Endothelial cell of umbilical vein (primary cell): ENCODE measurements at regions of chr6 and their contacts with region 1.

Region 1: DNA sequence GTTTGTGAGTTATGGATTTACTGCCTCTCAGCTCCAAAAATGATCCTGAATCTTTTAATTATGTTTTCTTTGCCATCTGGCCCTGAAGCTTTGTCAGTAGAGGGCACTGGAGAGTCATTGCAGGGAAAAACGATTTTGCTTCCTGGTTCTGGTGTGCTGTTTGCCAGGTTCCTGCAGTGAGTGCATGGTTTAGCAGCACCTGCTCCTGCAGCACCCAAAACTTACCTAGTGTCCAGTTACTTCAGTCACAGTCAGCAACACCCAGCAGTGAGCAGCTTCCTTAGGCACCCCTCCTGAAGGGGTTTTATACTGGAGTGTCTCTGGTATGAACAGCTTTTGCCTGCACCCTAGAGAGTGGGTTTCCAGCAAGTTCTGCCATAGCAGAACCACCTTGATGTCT is 6.0 kb upstream of the TRIM26 start:
- DNase-seq: peak; percentile 67
- H3K4me3 ChIP-seq: no peak overlapping the region
- H3K27ac ChIP-seq: no peak overlapping the region
- H3K4me1 ChIP-seq: peaks cover 3% of the 10 kb centered on the region
- H3K27me3 ChIP-seq: no peaks in the 10 kb centered on the region
- CTCF ChIP-seq: peak; percentile 77 to 82
- POLR2A ChIP-seq: no peak

Region 2: GRCh38 chr6:30206799-30207618 is 12.2 kb before region 1 on chr6:
- CTCF ChIA-PET with region 1: interaction called, 18 read pairs
- POLR2A ChIA-PET with region 1: no interaction called
- dilution Hi-C with region 1: no loop called
- intact Hi-C with region 1: no loop called
- DNase-seq: peak; percentile 8
- H3K4me3 ChIP-seq: no peak overlapping the region
- H3K27ac ChIP-seq: no peak overlapping the region
- H3K4me1 ChIP-seq: peaks cover 15% of the 10 kb centered on the region
- H3K27me3 ChIP-seq: no peaks in the 10 kb centered on the region
- CTCF ChIP-seq: no peak
- POLR2A ChIP-seq: no peak

Region 3: GRCh38 chr6:30238174-30238795 is 19.0 kb after region 1 on chr6:
- CTCF ChIA-PET with region 1: interaction called, 16 read pairs
- POLR2A ChIA-PET with region 1: no interaction called
- dilution Hi-C with region 1: no loop called
- intact Hi-C with region 1: no loop called
- DNase-seq: no peak
- H3K4me3 ChIP-seq: no peak overlapping the region
- H3K27ac ChIP-seq: no peak overlapping the region
- H3K4me1 ChIP-seq: no peaks in the 10 kb centered on the region
- H3K27me3 ChIP-seq: peaks cover 7 to 17% of the 10 kb centered on the region in 2 experiments
- CTCF ChIP-seq: peak in 1 of 2 donors; percentile 34
- POLR2A ChIP-seq: no peak

Region 4: DNA sequence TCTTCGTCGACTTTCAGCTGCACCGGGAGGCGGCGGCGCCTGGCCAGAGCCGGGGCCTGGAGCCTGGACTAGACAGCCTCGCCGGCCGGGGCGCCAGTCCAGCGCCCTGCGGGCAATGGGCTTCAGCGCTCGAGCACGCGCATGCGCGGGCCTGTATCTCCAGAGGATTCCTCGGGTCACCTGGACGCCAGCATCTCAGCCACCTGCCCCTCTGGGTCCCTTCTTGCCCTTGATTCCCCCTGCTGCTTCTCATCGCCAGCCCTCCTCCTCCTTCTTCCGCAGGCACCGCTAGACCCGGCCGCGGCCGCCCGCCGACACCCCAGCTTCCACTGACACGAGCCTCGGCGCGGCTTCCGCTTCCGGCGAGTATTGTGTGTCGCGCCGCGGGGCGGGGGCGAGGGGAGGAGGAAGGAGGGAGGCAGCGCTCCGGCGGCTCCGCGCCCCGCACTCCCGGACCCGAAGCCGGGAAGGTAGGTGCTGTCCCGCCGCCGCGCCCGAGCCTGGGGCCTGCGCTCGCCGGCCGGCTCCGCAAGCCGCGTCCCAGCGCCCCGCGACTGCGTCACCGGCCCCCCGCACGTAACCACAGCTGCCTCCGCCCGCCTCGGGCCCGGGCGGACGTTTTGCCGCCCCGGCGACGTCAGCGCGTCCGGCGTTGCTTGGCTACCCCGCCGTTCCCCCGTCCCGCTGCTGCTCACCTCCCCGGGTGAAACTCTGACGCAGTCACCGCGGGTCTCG is 107.4 kb after region 1 on chr6 and contains the start of gene TRIM39:
- CTCF ChIA-PET with region 1: interaction called, 19 read pairs
- POLR2A ChIA-PET with region 1: no interaction called
- dilution Hi-C with region 1: no loop called
- intact Hi-C with region 1: no loop called
- DNase-seq: peak; percentile 85
- H3K4me3 ChIP-seq: peak within 1 kb of the TSS; percentile 65 to 87 (median 85)
- H3K27ac ChIP-seq: peak within 1 kb of the TSS; percentile 89
- H3K4me1 ChIP-seq: peaks cover 24% of the 10 kb centered on the region
- H3K27me3 ChIP-seq: no peaks in the 10 kb centered on the region
- CTCF ChIP-seq: no peak
- POLR2A ChIP-seq: peak; percentile 62
- total RNA-seq, gene TRIM39: 13.1 and 13.5 TPM in 2 replicates

Region 5: GRCh38 chr6:30349421-30350177 is 130.4 kb after region 1 on chr6:
- CTCF ChIA-PET with region 1: interaction called, 4 read pairs
- POLR2A ChIA-PET with region 1: no interaction called
- dilution Hi-C with region 1: no loop called
- intact Hi-C with region 1: loop called (anchors 2 kb)
- DNase-seq: no peak
- H3K4me3 ChIP-seq: no peak overlapping the region
- H3K27ac ChIP-seq: no peak overlapping the region
- H3K4me1 ChIP-seq: peaks cover 7% of the 10 kb centered on the region
- H3K27me3 ChIP-seq: peaks cover 6 to 18% of the 10 kb centered on the region in 2 experiments
- CTCF ChIP-seq: no peak
- POLR2A ChIP-seq: no peak

Region 6: DNA sequence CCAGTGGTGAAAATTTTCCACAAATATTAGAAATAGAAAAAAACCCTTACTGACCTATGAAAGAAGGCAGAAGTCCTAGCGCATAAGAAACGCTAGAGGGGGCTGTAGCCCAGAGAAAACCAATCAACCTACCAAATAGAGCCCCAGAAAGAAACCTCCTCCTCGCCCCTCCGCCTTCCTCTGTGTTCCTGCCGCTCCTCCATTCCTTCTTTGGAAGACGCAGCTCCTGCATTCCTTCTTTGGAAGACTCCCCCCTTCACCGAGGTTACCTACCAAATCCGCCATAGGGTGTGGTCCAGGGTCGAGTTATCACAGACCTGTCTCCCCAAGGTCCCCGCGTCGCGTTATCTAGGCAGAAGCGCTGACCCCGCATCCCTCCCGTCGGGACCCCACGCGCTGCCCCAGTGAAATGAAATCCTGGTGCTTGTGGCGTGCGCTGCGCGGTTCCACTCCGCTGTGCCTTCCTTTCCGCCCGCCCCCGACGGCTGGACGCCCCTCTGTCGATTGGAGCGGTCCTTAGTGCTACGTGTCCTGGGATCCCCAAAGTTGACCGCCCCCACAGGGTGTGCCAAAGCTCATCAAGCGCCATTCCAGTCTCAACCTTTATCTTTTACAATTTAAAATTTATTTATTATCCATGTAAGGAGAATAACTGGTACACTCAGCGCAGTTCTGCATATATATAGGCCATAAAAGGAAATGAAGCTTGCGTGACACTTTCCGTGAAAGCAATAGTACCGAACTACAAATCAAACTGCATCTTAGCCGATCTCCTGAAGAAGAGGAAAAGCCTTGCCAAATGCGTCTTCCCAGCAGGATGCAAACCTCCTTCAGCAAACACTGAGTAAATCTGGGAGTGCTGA is 138.7 kb after region 1 on chr6:
- CTCF ChIA-PET with region 1: interaction called, 10 read pairs
- POLR2A ChIA-PET with region 1: no interaction called
- dilution Hi-C with region 1: no loop called
- intact Hi-C with region 1: no loop called
- DNase-seq: peak; percentile 71
- H3K4me3 ChIP-seq: peak overlapping the region; percentile 34 to 54 (median 43)
- H3K27ac ChIP-seq: no peak overlapping the region
- H3K4me1 ChIP-seq: peaks cover 5% of the 10 kb centered on the region
- H3K27me3 ChIP-seq: peaks cover 31 to 57% of the 10 kb centered on the region in 2 experiments
- CTCF ChIP-seq: peak; percentile 79 to 83
- POLR2A ChIP-seq: no peak

Region 7: DNA sequence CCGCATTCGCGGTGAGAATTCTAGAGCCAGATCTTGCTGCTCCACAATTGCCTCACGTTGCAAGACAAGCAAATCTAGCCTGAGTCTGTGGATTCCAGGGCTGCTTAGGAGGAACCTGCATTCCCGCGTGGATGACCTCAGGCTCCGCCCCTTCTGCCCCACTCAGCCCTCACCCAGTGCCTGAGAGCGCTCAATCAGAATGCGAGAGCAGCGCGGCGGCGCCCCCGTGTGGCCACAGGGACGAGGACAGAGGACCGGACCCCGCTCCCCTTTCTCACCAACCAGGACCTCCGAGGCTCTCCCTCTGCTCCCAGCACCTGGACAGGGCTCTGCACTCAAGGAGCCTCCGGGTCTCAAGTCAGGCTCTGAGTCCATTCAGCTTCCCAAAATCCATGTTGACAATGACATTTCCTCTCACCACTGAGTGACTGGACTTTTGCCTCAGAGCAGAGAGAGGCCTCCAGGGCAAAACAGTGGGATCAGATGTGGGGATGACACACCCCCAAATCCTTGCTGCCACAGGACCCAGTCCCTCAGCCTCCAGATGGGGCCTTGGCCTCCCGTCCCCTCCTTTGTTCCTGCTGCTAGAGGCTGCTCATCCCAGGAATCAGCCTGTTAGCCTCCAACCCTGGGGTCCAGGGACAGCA is 177.7 kb after region 1 on chr6:
- CTCF ChIA-PET with region 1: interaction called, 37 read pairs
- POLR2A ChIA-PET with region 1: no interaction called
- dilution Hi-C with region 1: no loop called
- intact Hi-C with region 1: loop called (anchors 1 kb)
- DNase-seq: peak; percentile 72
- H3K4me3 ChIP-seq: no peak overlapping the region
- H3K27ac ChIP-seq: no peak overlapping the region
- H3K4me1 ChIP-seq: no peaks in the 10 kb centered on the region
- H3K27me3 ChIP-seq: peaks cover 21 to 25% of the 10 kb centered on the region in 2 experiments
- CTCF ChIP-seq: peak; percentile 92 to 98
- POLR2A ChIP-seq: no peak